ENCODE measurements at regions of chr11 and their contacts with region 1.

Region 1: DNA sequence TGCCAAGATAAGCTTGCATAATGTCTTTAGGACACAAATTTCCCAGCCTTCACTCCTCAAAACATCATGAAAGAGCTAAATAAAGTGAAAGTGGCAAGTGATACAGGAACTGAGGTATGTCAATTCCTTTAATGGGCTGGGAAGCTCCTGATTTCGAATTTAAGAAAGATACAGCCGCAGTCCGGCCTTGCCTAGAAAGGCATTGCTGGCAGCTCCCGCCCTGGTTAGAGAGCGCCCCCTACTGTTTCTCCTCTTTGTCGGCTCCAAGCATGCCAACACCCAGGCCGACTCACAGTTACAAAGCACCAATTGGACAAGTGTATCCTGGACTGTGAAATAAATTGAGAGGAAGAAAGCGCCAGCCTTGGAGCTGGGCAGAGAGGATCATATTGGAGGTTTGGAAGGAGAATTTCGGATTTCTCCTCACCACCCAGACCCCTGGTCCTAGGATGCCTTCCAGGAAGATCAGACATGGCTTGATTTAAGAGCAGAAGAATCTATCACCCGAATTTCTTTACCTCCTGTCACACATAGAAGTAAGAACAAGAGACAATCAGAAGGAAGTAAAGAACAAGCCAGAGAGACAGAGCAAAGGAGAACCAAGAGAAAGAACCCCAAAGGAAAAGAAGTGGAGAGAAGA is 84.0 kb downstream of the FAM76B start:
- DNase-seq: peak; percentile 69 to 92
- H3K4me3 ChIP-seq: no peak overlapping the region
- H3K4me1 ChIP-seq: 0 out of 2 replicates have a peak, but pooled peaks cover 2% of the 10 kb centered on the region
- H3K27me3 ChIP-seq: no peaks in the 10 kb centered on the region

Region 2: DNA sequence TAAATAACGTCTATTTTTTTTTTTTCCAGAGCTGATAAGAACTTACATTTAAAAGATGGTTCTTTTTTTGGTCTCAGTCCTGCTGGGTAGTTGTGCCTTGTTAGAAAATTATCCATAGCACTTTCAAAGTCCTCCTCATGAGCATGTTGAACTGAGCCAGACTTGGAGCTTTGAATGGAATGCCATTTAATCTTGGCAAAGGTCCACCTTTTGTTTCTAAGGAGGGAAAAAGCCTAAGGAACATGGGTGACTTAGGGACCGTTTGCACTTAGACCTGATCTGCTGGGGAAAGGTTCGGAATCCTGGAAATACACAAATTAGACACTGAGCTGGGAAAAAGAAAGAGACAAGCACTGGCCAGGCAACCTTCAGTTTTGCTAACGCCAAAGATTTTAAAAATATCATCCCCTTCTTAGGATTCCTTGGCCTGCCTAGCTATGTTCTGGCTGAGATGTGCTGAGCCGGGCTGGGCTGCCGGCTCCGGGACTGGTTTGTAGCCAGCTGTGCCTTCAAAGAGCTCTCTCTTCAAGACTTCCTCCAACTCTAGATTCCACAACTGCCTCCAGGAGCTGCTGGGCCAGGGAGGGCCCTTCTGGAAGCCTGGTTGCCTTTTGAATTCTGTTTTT is 548.6 kb before region 1 on chr11:
- in situ Hi-C with region 1: loop called (anchors 5 kb)
- DNase-seq: no peak
- H3K4me3 ChIP-seq: no peak overlapping the region
- H3K4me1 ChIP-seq: no peaks in the 10 kb centered on the region
- H3K27me3 ChIP-seq: no peaks in the 10 kb centered on the region

Region 3: DNA sequence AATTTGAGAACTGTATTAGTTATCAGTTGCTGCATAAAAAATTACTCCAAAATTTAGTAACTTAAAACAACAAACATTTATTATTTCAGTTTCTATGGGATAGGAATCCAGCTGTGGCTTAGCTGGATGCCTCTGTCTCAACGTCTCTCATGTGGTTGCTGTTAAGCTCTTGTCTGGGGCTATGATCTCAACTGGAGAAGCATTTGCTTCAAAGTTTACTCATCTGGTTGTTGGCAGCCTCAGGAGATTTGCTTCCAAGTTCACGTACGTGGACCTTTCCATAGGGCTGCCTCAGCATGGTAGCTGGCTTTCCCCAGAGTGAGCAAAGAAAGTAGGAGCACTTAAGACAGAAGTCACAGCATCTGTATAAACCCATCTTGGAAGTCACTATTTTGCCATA is 329.7 kb before region 1 on chr11:
- in situ Hi-C with region 1: no loop called
- DNase-seq: no peak
- H3K4me3 ChIP-seq: no peak overlapping the region
- H3K4me1 ChIP-seq: peaks cover 18% of the 10 kb centered on the region
- H3K27me3 ChIP-seq: no peaks in the 10 kb centered on the region

Region 4: GRCh38 chr11:96254087-96254486 is 548.5 kb after region 1 on chr11:
- in situ Hi-C with region 1: no loop called
- DNase-seq: no peak
- H3K4me3 ChIP-seq: no peak overlapping the region
- H3K4me1 ChIP-seq: peaks cover 29% of the 10 kb centered on the region
- H3K27me3 ChIP-seq: no peaks in the 10 kb centered on the region

Measured in HAP-1 (cell line).